Activated CD4-positive, alpha-beta T cell treated with anti-CD3 and anti-CD28 coated beads for 36 hours (primary cell): ENCODE measurements at regions of chr13 and their contacts with region 1.

Region 1: GRCh38 chr13:76886292-76887075 is at the start of gene KCTD12:
- DNase-seq: peak; percentile 86
- ATAC-seq: peak; percentile 78
- H3K4me3 Mint-ChIP-seq: peak within 1 kb of the TSS; percentile 93
- H3K27ac Mint-ChIP-seq: peak within 1 kb of the TSS; percentile 90
- H3K4me1 Mint-ChIP-seq: peaks cover 29% of the 10 kb centered on the region
- H3K27me3 Mint-ChIP-seq: peaks cover 8% of the 10 kb centered on the region
- total RNA-seq, gene KCTD12: 9.9 to 11.1 TPM

Region 2: DNA sequence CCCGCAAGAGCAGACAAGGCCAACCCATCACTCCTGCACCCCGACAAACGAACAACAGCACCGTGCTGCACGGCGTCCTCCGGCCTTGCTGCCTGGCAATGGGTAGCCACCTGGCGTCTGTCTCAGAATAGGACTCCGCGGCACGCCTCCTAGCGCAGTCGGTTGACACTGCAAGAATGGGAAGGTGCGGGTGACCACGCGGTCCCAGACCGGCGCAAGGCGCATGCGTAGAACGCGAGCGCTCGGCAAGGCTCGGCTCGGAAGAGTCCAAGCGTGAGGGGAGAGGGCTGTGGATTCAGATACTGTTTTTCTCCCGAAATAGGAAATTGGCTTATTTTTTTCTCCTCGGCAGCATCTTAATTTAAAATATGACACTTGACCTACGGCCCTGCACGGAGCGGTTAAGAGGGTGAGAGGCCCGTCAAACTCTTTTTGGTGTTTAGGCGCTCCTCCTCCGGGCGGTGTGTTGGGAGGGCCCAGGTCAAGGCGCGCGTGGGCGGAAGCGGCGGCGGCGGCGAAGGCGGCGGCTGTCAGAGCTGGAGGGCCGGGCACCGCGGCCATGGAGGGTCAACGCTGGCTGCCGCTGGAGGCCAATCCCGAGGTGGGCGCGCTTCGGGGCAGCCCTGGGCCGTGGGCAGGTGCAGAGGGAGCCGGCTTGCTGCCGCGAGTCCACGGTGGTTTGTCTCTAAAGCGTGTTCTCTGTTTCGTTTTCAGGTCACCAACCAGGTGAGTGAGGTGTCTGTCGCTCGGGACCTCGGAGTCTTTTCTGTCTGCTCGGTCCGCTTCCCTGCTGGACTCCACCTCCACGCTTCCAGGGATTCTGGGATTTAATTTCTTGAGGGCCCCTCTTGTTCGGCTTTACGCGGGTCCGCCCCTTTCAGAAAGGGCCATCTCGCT is 1337.0 kb before region 1 on chr13 and contains the start of gene UCHL3:
- CTCF ChIA-PET with region 1: no interaction called
- POLR2A ChIA-PET with region 1: no interaction called
- intact Hi-C with region 1: loop called in 1 of 2 experiments (anchors 5 kb)
- DNase-seq: peak; percentile 99
- ATAC-seq: peak; percentile 96
- H3K4me3 Mint-ChIP-seq: peak within 1 kb of the TSS; percentile 85
- H3K27ac Mint-ChIP-seq: peak within 1 kb of the TSS; percentile 95
- H3K4me1 Mint-ChIP-seq: peaks cover 41% of the 10 kb centered on the region
- H3K27me3 Mint-ChIP-seq: no peaks in the 10 kb centered on the region
- total RNA-seq, gene UCHL3: 42.2 to 45.3 TPM

Region 3: GRCh38 chr13:75687150-75687763 is 1199.2 kb before region 1 on chr13:
- CTCF ChIA-PET with region 1: no interaction called
- POLR2A ChIA-PET with region 1: no interaction called
- intact Hi-C with region 1: loop called in 1 of 2 experiments (anchors 5 kb)
- DNase-seq: no peak
- ATAC-seq: no peak
- H3K4me3 Mint-ChIP-seq: no peak overlapping the region
- H3K27ac Mint-ChIP-seq: no peak overlapping the region
- H3K4me1 Mint-ChIP-seq: peaks cover 9% of the 10 kb centered on the region
- H3K27me3 Mint-ChIP-seq: no peaks in the 10 kb centered on the region

Region 4: DNA sequence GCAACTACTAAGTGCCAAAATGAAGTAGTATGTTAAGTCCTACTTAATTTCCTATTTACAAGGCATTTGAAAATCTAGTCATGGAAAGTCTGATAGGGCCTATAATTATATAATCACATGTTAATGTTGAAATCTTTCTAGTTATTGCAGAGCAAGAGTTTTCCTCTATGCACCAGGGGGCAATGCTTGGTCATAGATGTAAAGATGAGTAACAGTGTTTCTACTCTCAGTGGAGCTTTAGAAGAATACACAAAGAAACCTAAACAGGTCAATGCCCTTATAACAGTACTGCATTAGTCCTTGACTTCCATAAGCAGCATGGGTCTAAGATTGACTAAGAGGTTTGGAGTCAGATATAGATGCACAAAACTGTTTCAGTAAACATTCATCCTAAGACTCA is 218.9 kb before region 1 on chr13:
- CTCF ChIA-PET with region 1: interaction called, 4 read pairs
- POLR2A ChIA-PET with region 1: no interaction called
- intact Hi-C with region 1: loop called in 1 of 2 experiments (anchors 5 kb)
- DNase-seq: peak; percentile 9
- ATAC-seq: peak; percentile 88
- H3K4me3 Mint-ChIP-seq: no peak overlapping the region
- H3K27ac Mint-ChIP-seq: no peak overlapping the region
- H3K4me1 Mint-ChIP-seq: no peaks in the 10 kb centered on the region
- H3K27me3 Mint-ChIP-seq: peaks cover under 1% of the 10 kb centered on the region

Region 5: DNA sequence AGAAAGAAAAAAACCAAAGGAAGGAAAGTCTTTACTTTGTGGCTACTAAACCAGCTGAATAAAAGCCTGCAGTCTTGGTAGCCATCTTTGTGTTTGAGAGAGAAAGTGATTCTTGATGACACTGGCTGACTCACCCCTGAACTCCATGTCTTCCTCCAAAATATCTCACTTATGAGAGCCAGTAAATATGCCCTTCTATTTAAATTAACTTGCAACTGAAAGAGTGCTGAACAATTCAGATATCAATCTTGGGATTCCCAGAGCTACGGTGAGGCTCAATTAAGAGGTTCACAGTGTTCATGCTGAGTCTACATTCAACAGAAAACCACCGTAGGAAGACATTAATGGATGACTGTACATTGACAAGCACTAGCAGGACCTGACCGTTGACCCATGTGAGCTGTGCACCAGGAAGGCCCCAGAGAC is 58.2 kb before region 1 on chr13:
- CTCF ChIA-PET with region 1: interaction called, 8 read pairs
- POLR2A ChIA-PET with region 1: no interaction called
- intact Hi-C with region 1: loop called (anchors 1 to 5 kb)
- DNase-seq: peak; percentile 34
- ATAC-seq: peak; percentile 95
- H3K4me3 Mint-ChIP-seq: no peak overlapping the region
- H3K27ac Mint-ChIP-seq: no peak overlapping the region
- H3K4me1 Mint-ChIP-seq: peaks cover 6% of the 10 kb centered on the region
- H3K27me3 Mint-ChIP-seq: peaks cover 3% of the 10 kb centered on the region

Region 6: DNA sequence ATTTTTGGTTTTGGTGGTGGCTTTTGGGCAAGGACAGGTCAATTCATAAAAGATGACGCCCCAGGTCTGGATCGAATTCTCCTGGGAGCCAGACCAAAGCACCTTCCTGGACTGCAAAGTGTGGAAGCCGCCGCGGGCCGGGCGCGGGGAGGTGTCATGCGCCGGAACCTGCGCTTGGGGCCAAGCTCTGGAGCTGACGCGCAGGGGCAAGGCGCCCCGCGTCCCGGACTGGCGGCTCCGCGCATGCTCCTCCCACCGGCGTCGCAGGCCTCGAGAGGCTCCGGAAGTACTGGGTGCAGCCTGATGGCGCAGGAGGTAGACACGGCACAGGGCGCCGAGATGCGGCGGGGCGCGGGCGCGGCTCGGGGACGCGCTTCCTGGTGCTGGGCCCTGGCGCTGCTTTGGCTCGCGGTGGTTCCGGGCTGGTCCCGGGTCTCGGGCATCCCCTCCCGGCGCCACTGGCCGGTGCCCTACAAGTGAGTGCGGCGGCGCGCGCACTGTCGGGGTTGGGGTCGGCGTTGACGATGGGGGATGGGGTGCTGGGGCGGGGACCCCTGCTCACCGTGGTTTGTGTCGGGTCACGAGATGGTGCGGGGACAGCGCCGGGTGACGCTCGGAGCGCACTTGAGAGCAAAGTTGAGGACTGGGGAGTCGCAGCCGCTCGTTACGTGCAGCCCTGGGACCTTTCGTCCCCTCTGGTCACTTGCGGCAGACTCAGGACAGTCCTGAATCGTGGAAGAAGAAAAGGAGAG is 105.5 kb after region 1 on chr13 and contains the start of gene CLN5:
- CTCF ChIA-PET with region 1: interaction called, 4 read pairs
- POLR2A ChIA-PET with region 1: interaction called, 4 read pairs
- intact Hi-C with region 1: loop called (anchors 1 to 5 kb)
- DNase-seq: peak; percentile 97
- ATAC-seq: peak; percentile 93
- H3K4me3 Mint-ChIP-seq: peak within 1 kb of the TSS; percentile 97
- H3K27ac Mint-ChIP-seq: peak within 1 kb of the TSS; percentile 99
- H3K4me1 Mint-ChIP-seq: peaks cover 36% of the 10 kb centered on the region
- H3K27me3 Mint-ChIP-seq: peaks cover 3% of the 10 kb centered on the region
- total RNA-seq, gene CLN5: 14.5 to 14.9 TPM

Region 7: DNA sequence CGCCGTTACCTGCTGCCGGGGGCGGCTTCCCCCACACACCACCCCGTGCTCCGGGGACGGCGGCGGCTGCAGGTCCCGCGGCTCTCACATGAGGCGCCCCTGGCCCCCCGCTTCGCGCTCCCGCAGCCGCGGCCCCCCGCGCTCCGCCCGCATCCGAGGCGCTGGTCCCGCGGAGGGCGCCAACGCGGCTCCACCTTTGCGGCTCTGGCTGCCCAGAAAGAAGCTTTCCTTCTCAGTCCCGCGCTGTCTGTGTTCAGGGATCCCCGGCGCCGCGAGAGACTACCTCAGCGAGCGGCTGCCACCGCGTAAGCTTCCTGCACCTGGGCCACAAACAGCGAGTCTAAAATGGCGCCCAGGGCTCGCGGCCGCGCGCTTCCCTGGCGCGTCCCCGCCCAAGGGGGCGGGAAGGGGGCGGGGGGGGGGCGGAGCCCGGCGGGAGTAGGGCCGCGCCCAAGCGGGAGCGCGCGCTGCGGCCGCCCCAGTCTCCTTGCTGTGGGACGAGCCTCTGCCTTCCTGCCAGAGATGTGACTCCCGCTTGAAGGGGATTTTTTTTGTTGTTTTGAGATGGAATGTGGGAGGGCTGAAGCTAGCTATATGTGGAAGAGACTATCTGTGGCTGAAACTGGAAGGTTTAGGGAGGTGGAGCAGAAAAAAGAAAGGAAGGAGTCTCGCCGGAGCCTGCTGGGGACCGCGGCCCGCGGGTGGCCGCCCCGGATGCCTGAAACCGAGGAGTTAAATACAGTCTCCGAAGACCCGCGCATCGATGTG is 140.5 kb after region 1 on chr13 and contains the start of gene FBXL3:
- CTCF ChIA-PET with region 1: interaction called, 3 read pairs
- POLR2A ChIA-PET with region 1: interaction called, 7 read pairs
- intact Hi-C with region 1: loop called in 1 of 2 experiments (anchors 2 kb)
- DNase-seq: peak; percentile 89
- ATAC-seq: peak; percentile 59
- H3K4me3 Mint-ChIP-seq: peak within 1 kb of the TSS; percentile 92
- H3K27ac Mint-ChIP-seq: peak within 1 kb of the TSS; percentile 96
- H3K4me1 Mint-ChIP-seq: peaks cover 47% of the 10 kb centered on the region
- H3K27me3 Mint-ChIP-seq: peaks cover 2% of the 10 kb centered on the region
- total RNA-seq, gene FBXL3: 28.4 to 31.6 TPM